GM13976 (cell line): ENCODE measurements at regions of chr6 and their contacts with region 1.

Region 1: DNA sequence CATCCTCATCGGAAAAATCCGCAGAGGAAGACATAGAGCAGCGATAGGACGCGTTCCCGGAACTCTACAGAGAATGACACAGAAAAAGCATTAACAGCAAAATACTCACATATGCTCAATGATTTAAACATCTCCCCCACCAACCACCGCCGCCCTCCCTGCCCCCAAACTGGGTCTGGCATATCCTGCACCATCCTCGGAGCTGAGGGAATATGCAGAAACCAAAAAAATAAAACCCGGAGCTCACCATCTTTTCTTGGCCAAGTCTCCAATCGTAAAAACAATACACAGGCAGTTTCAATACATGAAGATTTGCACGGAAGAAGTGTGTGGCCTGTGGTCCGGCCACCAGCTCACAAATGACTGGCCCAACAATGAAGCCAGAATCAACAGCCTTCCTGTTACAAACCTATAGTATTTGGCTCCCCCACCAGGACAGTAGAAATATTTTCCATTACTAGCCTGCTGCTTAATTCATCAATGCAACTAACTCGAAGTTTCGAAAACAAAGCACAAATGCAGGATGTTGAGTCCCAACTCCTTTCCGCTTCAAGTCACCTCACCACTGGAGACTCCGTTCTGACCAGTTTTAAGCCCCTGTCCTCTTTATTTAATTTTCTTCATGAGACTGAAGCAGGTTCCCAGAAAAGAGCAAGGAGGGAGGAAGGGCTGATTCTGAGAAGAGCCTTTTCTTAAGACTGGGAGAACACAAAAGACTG is 103.2 kb upstream of the BEND6 start:
- DNase-seq: peak; percentile 70
- CTCF ChIP-seq: peak; percentile 62

Region 2: DNA sequence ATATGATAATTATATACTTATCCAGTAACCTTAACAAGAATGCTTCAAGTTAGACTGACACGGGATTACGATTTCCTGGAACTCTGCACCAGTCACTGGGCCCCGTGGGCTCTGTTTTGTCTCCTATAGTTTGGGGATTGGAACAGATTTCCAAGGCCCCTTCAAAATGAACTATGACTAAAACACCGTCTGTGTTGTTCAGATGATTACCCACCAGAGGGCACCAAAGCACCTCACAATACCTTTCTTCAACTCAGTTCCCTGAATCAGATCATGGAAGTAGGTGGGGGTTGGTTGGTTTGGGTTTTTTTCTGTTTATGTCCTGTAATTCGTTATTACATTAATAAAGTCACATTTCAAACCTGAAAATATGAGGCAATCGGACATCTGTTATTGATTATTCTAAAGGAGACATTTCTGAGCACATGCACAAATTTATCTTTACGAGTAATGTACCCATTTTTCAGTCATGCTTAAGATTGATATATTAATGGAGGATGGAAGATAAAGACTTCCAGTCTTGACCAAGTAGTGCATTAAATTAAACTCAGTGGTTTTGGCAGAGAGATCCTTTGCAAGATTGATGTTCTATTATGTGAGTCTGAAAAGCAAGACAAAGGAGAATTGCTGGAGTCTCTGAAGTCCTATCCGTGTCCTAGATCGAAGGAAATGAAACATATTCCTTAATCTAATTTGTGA is 492.4 kb before region 1 on chr6:
- in situ Hi-C with region 1: loop called (anchors 25 kb)
- DNase-seq: peak; percentile 37
- CTCF ChIP-seq: peak; percentile 62

Region 3: DNA sequence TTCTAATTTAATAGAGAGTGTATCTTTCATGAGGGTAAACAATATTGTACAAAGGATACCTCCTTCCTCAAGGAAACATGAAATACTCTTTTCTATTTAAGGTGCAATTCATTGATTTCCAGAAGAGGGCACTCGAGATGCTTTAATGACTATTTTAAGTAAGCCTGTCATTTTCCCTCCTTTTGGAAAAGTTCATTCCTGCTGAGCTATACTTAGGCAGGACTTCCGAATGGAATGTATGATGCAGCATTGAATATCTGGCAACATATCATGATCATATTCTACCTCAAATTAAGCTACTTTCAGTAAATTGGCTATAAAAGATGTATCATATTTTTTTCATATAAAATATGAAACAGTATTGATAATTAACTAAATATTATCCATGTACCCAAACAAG is 214.1 kb before region 1 on chr6:
- in situ Hi-C with region 1: loop called (anchors 25 kb)
- DNase-seq: peak; percentile 29
- CTCF ChIP-seq: peak; percentile 28